Ascending aorta (tissue), 2 donors: ENCODE measurements at regions of chr3 and their contacts with region 1.

Region 1: GRCh38 chr3:159616212-159616825 is 372.3 kb upstream of the IL12A start:
- DNase-seq: no peak
- H3K4me3 ChIP-seq: no peak overlapping the region
- H3K27ac ChIP-seq: no peak overlapping the region
- H3K4me1 ChIP-seq: no peaks in the 10 kb centered on the region
- H3K27me3 ChIP-seq: no peaks in the 10 kb centered on the region
- CTCF ChIP-seq: peak; percentile 35 to 69 (median 46)

Region 2: DNA sequence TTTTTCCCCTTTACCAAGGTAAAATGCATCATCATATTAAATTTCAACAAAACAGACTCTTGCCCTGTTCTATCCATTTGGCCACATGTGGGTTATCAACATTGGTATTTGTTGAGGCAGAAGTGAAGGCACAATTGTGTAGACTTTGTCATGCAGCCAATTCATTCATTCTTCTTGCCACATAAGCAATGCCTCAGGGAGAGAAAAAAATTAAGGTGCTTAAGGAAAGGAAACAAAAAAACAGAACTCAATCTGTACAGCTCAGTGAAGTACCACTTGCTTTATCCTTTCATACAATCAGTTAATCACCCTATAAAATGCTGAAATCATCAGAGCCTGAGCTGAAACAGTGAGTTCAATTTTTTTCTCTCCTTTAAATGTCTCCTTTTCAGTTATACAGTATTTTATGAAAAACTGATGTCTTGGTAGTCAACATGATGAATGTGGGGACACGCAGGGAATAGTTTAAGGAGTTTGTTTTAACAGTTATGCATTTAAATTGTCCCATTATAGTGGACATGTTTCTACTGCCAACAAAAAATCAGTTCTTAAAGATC is 225.6 kb before region 1 on chr3:
- intact Hi-C with region 1: no loop called
- DNase-seq: no peak
- H3K4me3 ChIP-seq: no peak overlapping the region
- H3K27ac ChIP-seq: no peak overlapping the region
- H3K4me1 ChIP-seq: no peaks in the 10 kb centered on the region
- H3K27me3 ChIP-seq: no peaks in the 10 kb centered on the region
- CTCF ChIP-seq: no peak

Region 3: DNA sequence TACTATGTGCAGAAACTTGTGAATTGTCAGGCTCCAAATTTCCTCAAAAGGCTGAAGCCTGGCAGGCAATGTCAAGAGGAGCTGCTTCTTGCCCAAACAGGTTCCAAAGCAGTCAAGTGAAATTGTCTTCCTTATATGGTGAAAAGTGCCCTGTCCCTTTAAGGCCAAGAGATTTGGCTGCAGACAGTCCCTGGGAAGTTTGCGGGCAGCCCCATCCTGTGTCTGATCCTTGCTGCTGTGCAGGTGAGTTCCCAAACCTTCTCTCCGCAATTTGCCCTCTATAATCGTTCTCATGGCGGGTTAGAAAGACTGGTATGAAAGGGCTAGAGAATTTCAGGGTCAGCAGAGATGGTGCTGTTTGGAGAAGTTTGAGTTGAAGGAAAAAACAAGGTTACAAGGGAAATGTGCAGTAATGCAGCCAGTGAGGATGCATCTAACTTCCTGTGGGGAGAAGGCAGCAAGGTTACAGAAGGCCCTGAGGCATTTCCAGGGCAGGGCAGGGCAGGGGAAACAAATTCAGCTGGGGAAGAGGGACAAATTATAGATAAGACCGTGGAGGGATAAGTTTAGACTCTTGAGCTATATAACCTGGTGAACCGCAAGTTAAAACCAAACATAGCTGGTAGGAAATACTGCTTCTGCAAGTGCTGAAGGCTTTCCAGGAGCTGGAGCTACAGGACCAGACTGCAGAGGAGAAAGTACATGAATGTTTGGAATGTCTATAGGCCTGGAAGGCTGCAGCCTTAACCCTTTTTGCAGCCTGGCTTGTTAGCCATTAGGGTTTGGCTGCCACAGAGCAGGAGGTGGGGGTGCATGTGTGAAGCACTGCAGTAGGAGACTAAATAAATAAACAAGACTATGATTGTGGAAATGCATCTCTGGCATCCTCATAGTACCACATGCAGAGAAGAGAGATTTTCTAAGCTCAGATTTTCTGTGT is 116.1 kb after region 1 on chr3:
- intact Hi-C with region 1: loop called (anchors 10 kb)
- DNase-seq: no peak
- H3K4me3 ChIP-seq: peak overlapping the region; percentile 39 to 52
- H3K27ac ChIP-seq: peak overlapping the region; percentile 45 to 50
- H3K4me1 ChIP-seq: peaks cover 0 to 9% of the 10 kb centered on the region in 2 donors
- H3K27me3 ChIP-seq: no peaks in the 10 kb centered on the region
- CTCF ChIP-seq: no peak